ENCODE measurements at regions of chr4 and their contacts with region 1.

Region 1: DNA sequence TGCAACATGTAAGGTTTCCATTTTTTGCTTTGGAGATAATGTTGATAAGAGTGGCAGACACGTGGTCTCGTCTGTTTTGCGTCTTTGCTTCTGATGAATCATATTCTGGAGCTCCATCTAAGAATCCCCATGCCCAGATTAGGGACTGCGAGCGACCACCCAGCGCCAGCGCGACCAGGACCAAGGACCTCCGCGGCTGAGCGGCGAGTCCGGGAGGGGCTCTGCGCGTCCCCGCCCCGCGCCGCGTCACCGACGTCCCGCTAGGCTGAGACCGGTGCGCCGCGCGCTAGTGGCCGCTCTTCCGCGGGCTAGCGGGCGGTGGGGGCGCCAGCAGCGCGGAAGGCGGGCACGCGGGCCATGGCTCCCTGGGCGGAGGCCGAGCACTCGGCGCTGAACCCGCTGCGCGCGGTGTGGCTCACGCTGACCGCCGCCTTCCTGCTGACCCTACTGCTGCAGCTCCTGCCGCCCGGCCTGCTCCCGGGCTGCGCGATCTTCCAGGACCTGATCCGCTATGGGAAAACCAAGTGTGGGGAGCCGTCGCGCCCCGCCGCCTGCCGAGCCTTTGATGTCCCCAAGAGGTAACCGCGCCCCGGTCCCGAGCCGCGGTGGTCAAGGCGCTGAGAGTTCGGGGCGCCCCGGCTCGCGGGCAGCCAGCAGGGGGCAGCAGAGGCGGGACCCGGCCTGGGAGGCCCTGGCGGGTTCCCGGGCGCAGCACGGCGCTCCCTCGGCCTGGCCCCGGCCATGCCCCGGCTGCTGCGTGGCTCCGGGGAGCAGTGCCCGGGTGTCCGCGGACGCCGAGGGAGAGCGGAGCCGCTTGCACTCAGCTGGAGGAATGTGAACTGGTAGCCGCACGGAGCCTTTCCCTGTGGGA is at the start of gene SRD5A3:
- DNase-seq: peak; percentile 71
- ATAC-seq: peak; percentile 95
- H3K4me3 ChIP-seq: peak within 1 kb of the TSS; percentile 64
- H3K27ac ChIP-seq: peak within 1 kb of the TSS; percentile 79
- H3K4me1 ChIP-seq: peaks cover 14% of the 10 kb centered on the region
- H3K27me3 ChIP-seq: no peaks in the 10 kb centered on the region
- CTCF ChIP-seq: peak; percentile 84
- POLR2A ChIP-seq: peak; percentile 72
- RAD21 ChIP-seq: peak; percentile 80
- total RNA-seq, gene SRD5A3: 6.8 and 7.8 TPM in 2 replicates

Region 2: DNA sequence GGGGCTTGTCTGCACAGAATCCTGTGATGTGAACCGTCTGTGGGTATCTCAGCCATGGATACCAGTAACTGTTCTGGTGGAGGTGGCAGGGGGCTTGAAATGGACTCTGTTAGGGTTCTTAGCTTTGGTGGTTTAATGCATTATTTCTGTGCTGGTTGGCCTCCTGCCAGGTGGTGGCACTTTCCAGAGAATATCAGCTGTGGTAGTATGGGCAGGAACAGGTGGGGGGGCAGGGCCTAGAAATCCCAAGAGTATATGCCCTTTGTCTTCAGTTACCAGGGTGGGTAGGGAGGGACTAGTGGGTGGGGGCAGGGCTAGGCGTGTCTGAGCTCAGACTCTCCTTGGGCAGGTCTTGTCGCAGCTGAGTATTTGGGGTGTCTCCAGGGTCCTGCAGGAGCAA is 581.7 kb before region 1 on chr4:
- CTCF ChIA-PET with region 1: no interaction called
- POLR2A ChIA-PET with region 1: no interaction called
- dilution Hi-C with region 1: no loop called
- in situ Hi-C with region 1: loop called (anchors 25 kb)
- intact Hi-C with region 1: no loop called
- DNase-seq: no peak
- ATAC-seq: no peak
- H3K4me3 ChIP-seq: no peak overlapping the region
- H3K27ac ChIP-seq: no peak overlapping the region
- H3K4me1 ChIP-seq: no peaks in the 10 kb centered on the region
- H3K27me3 ChIP-seq: no peaks in the 10 kb centered on the region
- CTCF ChIP-seq: no peak
- POLR2A ChIP-seq: no peak
- RAD21 ChIP-seq: no peak

Region 3: GRCh38 chr4:55409468-55410171 is 63.4 kb after region 1 on chr4:
- CTCF ChIA-PET with region 1: no interaction called
- POLR2A ChIA-PET with region 1: no interaction called
- dilution Hi-C with region 1: no loop called
- in situ Hi-C with region 1: no loop called
- intact Hi-C with region 1: no loop called
- DNase-seq: peak; percentile 13
- ATAC-seq: peak; percentile 40; the same call in 1 of the 2 replicates
- H3K4me3 ChIP-seq: no peak overlapping the region
- H3K27ac ChIP-seq: peak overlapping the region; percentile 9; the same call in 1 of the 2 replicates
- H3K4me1 ChIP-seq: peaks cover 8% of the 10 kb centered on the region
- H3K27me3 ChIP-seq: no peaks in the 10 kb centered on the region
- CTCF ChIP-seq: peak; percentile 33; the same call in 1 of the 2 replicates
- POLR2A ChIP-seq: no peak
- RAD21 ChIP-seq: peak; percentile 43; the same call in 1 of the 2 replicates

Region 4: GRCh38 chr4:55435141-55435841 is 89.1 kb after region 1 on chr4:
- CTCF ChIA-PET with region 1: no interaction called
- POLR2A ChIA-PET with region 1: no interaction called
- dilution Hi-C with region 1: no loop called
- in situ Hi-C with region 1: no loop called
- intact Hi-C with region 1: loop called (anchors 5 kb)
- DNase-seq: peak; percentile 48
- ATAC-seq: peak; percentile 64
- H3K4me3 ChIP-seq: no peak overlapping the region
- H3K27ac ChIP-seq: peak overlapping the region; percentile 56; the same call in 1 of the 2 replicates
- H3K4me1 ChIP-seq: peaks cover 3% of the 10 kb centered on the region; the same call in 1 of the 2 replicates
- H3K27me3 ChIP-seq: no peaks in the 10 kb centered on the region
- CTCF ChIP-seq: peak; percentile 49
- POLR2A ChIP-seq: no peak
- RAD21 ChIP-seq: peak; percentile 42; the same call in 1 of the 2 replicates

Region 5: DNA sequence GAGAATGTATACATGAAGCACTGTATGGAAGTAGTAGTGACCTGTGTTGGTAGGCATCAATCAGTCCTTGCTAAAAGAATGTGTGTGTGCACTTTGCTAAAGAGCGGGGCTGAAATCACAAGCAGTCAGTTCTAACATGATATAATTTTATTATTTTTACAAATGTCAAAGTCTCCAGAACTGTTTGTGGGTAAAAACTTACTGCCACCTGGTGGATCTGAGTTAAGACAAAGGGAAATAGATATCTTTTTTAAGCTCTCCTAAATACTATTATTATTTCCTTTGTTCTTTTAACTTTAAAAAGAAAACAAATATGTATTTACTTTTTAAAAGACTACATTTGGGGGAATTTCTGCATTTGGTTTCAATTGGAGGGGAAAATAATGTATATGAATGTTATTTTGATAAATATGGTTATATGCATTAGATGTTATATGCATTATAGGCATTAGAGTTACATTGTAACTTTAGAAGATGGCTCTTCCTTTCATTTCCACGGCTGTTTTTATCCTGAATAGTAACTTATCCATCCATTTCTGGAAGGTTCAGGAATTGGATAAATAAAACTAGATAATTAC is 208.3 kb after region 1 on chr4:
- CTCF ChIA-PET with region 1: interaction called, 3 read pairs
- POLR2A ChIA-PET with region 1: no interaction called
- dilution Hi-C with region 1: no loop called
- in situ Hi-C with region 1: loop called (anchors 5 kb)
- intact Hi-C with region 1: loop called (anchors 1 kb)
- DNase-seq: peak; percentile 71
- ATAC-seq: peak; percentile 67
- H3K4me3 ChIP-seq: no peak overlapping the region
- H3K27ac ChIP-seq: no peak overlapping the region
- H3K4me1 ChIP-seq: 0 out of 2 replicates have a peak, but pooled peaks cover 2% of the 10 kb centered on the region
- H3K27me3 ChIP-seq: peaks cover 2% of the 10 kb centered on the region; the same call in 1 of the 2 replicates
- CTCF ChIP-seq: peak; percentile 72
- POLR2A ChIP-seq: no peak
- RAD21 ChIP-seq: peak; percentile 72

Region 6: DNA sequence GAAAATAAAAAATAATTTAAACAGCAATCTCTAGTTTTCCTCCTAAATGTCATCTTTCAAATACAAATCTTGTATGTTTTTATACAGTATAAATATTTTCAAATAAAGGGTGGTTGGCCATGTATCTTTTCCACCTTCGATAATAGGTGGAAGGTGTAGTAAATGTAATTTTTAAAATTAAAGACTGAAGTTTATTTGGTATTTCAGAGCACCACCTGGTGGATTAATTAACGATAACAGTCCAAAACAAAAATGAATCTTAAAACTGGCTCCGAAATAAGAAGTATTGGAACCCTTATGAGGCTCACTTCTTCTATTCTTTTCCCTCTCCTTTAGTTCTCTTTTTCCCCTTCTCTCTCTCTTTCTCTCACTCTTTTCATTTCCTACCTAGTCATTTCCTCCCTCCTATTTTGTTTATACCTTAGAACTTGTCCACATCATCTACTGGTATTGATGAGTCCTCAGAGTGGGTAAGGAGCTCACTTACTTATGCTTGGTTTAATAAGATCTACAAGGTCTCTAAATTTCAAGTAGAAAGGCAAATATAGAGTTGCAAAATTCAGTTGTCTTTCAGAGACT is 390.5 kb after region 1 on chr4:
- CTCF ChIA-PET with region 1: no interaction called
- POLR2A ChIA-PET with region 1: no interaction called
- dilution Hi-C with region 1: no loop called
- in situ Hi-C with region 1: loop called (anchors 25 kb)
- intact Hi-C with region 1: loop called (anchors 1 kb)
- DNase-seq: peak; percentile 3
- ATAC-seq: no peak
- H3K4me3 ChIP-seq: no peak overlapping the region
- H3K27ac ChIP-seq: no peak overlapping the region
- H3K4me1 ChIP-seq: no peaks in the 10 kb centered on the region
- H3K27me3 ChIP-seq: peaks cover 7% of the 10 kb centered on the region
- CTCF ChIP-seq: peak; percentile 42
- POLR2A ChIP-seq: no peak
- RAD21 ChIP-seq: peak; percentile 34; the same call in 1 of the 2 replicates

Region 7: DNA sequence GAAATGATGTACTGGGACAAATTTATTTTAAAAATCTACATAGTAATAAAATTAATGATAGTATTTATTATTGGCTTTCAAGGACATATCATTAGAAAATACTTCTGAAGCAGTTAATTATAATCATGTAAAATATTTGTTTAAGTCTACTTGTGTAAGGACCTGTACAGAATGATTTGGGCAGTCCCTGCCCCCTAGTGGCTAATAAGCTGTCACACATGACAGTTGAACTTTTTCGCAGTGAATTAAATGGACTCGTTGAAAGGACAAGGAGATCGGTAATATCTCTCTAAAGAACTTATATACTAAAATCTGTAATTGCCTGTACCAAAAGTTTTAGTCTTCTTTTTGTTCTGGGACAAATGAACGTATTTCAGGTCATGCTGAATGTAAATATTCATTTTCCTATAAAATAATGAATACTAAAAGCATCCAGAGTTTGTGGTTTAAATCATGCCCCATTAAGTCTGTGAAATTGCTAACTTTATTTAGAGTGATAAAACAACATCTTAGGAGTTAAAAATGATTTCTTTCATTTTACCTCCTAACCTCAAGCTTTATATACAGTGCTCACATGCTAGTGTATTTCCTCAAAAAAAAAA is 520.9 kb after region 1 on chr4:
- CTCF ChIA-PET with region 1: no interaction called
- POLR2A ChIA-PET with region 1: no interaction called
- dilution Hi-C with region 1: no loop called
- in situ Hi-C with region 1: no loop called
- intact Hi-C with region 1: loop called (anchors 5 kb)
- DNase-seq: peak; percentile 74
- ATAC-seq: peak; percentile 75
- H3K4me3 ChIP-seq: no peak overlapping the region
- H3K27ac ChIP-seq: no peak overlapping the region
- H3K4me1 ChIP-seq: peaks cover 2% of the 10 kb centered on the region; the same call in 1 of the 2 replicates
- H3K27me3 ChIP-seq: no peaks in the 10 kb centered on the region
- CTCF ChIP-seq: peak; percentile 79
- POLR2A ChIP-seq: no peak
- RAD21 ChIP-seq: peak; percentile 62